Activated naive CD4-positive, alpha-beta T cell treated with anti-CD3 and anti-CD28 coated beads, Interleukin-2, amount 10 ng/mL, durations not matched to agents 7 days and 5 days (primary cell): ENCODE measurements at regions of chr6 and their contacts with region 1.

Region 1: GRCh38 chr6:41306187-41306854 is 19.8 kb upstream of the TREM1 start:
- DNase-seq: peak; percentile 65
- H3K4me3 Mint-ChIP-seq: no peak overlapping the region
- H3K27ac Mint-ChIP-seq: no peak overlapping the region
- H3K4me1 Mint-ChIP-seq: peaks cover 18% of the 10 kb centered on the region
- H3K27me3 Mint-ChIP-seq: peaks cover 46% of the 10 kb centered on the region

Region 2: DNA sequence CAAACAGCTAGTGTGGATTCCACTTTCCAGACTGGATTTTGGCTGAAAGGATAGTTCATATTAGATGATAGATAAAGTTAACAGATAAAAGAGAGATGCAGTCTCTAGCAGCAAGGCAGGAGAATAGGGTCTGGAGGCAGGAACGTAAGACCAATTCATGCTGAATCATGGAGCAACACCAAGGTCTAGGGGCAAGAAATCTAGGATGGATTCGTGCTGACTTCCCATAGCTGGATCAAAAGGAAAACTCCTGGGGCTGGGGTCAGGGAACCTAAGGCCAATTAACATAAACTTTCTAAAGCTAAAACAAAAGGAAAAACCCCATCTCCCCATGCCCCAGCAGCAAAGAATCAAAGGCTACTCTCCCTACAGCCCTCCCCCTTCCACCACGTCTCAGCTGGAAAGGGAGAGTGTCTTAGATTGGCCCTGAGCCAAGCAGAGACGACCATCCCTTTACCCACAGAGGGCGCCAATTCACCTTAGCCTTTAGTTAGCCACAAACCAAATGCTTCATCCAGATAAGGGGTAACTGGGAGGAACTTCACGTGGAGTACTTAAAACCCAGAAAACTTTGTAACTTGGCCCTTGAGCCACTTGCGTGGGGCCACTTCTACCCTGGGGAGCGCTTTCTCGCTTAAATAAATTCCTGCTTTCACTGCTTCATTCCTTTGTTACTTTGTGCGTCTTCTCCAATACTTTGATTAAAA is 27.5 kb before region 1 on chr6:
- CTCF ChIA-PET with region 1: interaction called, 19 read pairs
- DNase-seq: peak; percentile 81
- H3K4me3 Mint-ChIP-seq: no peak overlapping the region
- H3K27ac Mint-ChIP-seq: no peak overlapping the region
- H3K4me1 Mint-ChIP-seq: peaks cover 10% of the 10 kb centered on the region
- H3K27me3 Mint-ChIP-seq: peaks cover 54% of the 10 kb centered on the region

Region 3: DNA sequence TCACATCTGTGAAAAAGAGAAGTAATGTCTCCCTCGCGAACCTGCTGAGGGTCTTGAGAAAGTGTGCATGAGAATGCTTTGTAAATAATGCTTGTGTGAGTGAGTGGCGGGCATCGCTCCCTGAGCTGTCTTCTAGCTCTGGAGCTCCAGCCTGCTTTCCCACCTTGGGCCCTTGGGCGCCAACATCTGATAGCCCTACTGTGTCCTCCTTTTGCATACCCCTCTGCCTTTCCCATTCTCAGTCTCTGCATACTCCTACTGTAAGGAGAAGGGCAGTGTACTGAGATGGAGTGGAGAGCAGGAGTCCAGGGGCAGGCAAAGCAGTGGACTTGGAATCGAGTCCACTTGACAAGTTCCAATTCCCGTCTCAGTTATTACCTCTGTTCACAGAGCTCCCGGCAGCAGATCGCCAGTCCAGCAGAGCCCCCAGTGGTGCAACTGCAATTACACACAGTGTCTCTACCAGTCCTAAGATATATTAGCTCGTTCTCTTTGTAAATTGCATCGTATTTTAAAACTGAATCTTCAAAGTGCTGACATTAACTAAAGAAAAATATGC is 28.2 kb after region 1 on chr6:
- CTCF ChIA-PET with region 1: interaction called, 10 read pairs
- DNase-seq: no peak
- H3K4me3 Mint-ChIP-seq: no peak overlapping the region
- H3K27ac Mint-ChIP-seq: no peak overlapping the region
- H3K4me1 Mint-ChIP-seq: peaks cover 32% of the 10 kb centered on the region
- H3K27me3 Mint-ChIP-seq: peaks cover 35% of the 10 kb centered on the region